ENCODE measurements at regions of chr4 and their contacts with region 1.

Region 1: GRCh38 chr4:186067757-186068385 is 1.1 kb upstream of the TLR3 start:
- DNase-seq: peak; percentile 71
- ATAC-seq: peak; percentile 87
- H3K4me3 Mint-ChIP-seq: no peak overlapping the region
- H3K27ac Mint-ChIP-seq: no peak overlapping the region
- H3K4me1 Mint-ChIP-seq: peaks cover 21% of the 10 kb centered on the region
- H3K27me3 Mint-ChIP-seq: peaks cover 10% of the 10 kb centered on the region

Region 2: DNA sequence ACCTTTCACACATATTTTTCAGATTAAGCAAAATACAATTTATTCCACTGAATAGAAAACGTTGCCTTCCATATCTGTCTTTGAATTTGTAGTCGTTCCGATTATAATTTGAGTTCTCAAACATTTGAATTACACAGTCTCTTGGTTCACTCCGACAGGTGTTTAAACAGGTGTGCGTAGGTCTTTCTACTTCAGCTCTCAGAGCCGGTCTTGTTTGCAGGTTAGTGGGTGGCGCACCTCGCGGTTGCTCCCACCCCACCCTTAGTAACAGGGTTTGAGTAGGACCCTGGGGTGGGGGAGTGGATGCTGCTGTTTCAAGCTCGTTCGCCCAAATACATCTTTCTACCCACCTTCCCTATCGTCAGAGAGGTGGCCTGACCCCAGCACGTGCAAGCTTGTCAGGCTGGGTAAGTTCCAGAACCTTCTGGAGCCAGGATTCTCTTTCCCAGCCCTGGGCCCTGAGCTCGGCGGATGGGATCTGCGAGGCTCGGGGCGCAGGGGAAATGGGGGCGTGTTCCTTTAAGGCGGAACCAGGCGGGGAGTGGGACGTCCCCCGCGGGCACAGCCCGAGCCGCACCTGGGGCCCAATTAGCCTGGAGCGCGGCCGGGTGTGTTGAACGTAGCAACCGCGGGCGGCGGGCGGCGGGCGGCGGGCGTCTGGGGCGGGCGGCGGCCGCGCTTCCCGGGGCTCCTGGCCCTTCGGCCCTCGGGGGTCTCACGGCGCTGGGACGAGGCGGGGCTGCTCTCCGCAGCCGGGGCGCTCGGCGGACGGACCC is 36.4 kb after region 1 on chr4 and contains the start of gene FAM149A:
- CTCF ChIA-PET with region 1: no interaction called
- DNase-seq: peak; percentile 51
- ATAC-seq: peak; percentile 83
- H3K4me3 Mint-ChIP-seq: peak within 1 kb of the TSS; percentile 54
- H3K27ac Mint-ChIP-seq: no peak within 1 kb of the TSS
- H3K4me1 Mint-ChIP-seq: peaks cover 5% of the 10 kb centered on the region
- H3K27me3 Mint-ChIP-seq: peaks cover 48% of the 10 kb centered on the region
- total RNA-seq, gene FAM149A: 1.2 TPM

Region 3: DNA sequence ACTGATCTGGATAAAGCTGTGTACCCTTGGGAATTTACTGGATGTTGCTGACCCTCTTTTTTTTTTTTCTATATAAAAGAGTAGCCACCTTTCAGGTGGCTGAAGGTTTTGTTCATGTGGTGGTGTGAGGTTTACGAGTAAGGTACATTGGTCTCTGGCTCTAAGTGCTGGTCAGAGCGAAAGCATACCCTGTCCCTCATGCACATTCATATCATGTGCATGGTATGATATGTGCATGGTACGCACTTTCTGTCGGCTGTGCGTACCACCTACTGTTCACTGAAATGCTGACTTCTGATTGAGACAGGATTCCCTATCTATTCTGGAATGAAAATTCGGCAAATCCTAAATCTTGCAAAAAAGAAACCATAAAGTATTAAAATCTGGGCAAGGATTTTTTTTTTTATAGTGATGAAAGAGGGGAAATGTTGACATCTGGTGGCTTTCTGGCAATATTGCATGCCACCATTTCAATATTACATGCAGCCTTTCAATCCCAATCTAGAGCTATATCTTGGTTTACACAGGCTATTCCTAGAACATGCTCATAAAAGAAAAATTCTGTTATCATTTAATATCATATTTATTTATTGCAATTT is 69.4 kb after region 1 on chr4:
- CTCF ChIA-PET with region 1: interaction called, 62 read pairs
- DNase-seq: no peak
- ATAC-seq: no peak
- H3K4me3 Mint-ChIP-seq: no peak overlapping the region
- H3K27ac Mint-ChIP-seq: no peak overlapping the region
- H3K4me1 Mint-ChIP-seq: peaks cover 27% of the 10 kb centered on the region
- H3K27me3 Mint-ChIP-seq: peaks cover 7% of the 10 kb centered on the region

Measured in activated CD8-positive, alpha-beta memory T cell treated with anti-CD3 and anti-CD28 coated beads, Interleukin-2, amount 10 ng/mL, durations not matched to agents 7 days and 5 days (primary cell).